Motor neuron (in vitro differentiated cells): ENCODE measurements at regions of chr6 and their contacts with region 1.

Region 1: DNA sequence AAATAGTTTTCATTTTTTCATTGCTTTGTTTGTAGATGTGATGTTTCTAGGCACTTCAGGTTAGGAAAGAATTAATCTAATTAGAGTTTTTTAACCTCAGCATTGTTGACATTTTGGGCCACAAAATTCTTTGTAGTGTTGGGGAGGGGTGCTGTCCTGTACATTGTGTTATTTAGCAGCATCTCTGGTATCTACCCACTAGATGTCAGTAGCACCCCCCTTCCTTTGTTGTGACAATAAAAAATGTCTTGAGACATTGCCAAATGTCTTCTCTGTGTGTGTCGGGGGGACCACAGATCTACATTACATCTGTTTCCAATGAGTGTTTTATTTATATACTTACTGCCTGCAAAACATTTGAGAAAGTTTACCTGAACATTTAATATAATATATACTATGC is 45.6 kb downstream of the EYA4 start:
- ATAC-seq: peak in 2 of 8 experiments; percentile 47 to 63
- H3K4me3 ChIP-seq: no peak overlapping the region
- H3K27ac ChIP-seq: no peak overlapping the region
- H3K4me1 ChIP-seq: no peaks in the 10 kb centered on the region

Region 2: DNA sequence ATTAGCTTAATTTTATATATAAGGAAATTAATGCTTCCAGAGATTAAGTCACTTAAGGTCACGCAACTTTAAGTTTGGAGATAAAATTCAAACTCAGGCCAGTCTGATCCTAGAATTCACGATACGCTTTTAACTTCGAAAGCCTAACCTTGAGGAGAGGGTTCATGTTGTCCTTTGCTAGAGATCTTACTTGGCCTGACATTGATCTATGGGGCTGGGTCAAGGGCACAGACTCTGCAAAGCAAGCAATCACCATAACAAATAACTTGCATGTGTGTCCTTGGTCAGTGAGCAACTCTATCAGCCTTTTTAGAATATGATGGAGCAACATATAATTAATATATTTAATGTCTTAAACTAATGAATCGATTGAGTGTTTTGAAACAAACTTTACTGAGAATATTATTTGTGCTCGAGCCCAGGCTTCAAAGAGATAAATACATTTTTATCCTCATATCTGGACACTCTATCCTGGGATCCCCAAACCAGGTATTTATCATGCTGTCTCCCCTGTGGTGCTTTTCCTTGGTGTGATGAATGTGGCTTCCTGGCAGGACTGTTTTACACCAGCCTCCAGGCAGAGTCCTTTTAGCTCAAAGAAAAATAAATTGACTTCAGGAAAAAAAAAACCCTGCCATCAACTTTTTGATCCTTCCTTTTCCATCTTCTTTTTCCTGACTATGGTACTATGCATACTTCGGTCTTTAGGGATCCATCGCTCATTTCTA is 443.3 kb before region 1 on chr6:
- in situ Hi-C with region 1: no loop called
- ATAC-seq: peak in 4 of 8 experiments; percentile 37 to 76 (median 52)
- H3K4me3 ChIP-seq: no peak overlapping the region
- H3K27ac ChIP-seq: no peak overlapping the region
- H3K4me1 ChIP-seq: peaks cover 11 to 13% of the 10 kb centered on the region in 2 donors

Region 3: GRCh38 chr6:133512410-133513016 is 225.7 kb after region 1 on chr6:
- in situ Hi-C with region 1: loop called in 1 of 9 experiments (anchors 25 kb)
- ATAC-seq: peak in 4 of 8 experiments; percentile 53 to 75 (median 63)
- H3K4me3 ChIP-seq: no peak overlapping the region
- H3K27ac ChIP-seq: no peak overlapping the region
- H3K4me1 ChIP-seq: no peaks in the 10 kb centered on the region